ENCODE measurements at regions of chr4 and their contacts with region 1.

Region 1: DNA sequence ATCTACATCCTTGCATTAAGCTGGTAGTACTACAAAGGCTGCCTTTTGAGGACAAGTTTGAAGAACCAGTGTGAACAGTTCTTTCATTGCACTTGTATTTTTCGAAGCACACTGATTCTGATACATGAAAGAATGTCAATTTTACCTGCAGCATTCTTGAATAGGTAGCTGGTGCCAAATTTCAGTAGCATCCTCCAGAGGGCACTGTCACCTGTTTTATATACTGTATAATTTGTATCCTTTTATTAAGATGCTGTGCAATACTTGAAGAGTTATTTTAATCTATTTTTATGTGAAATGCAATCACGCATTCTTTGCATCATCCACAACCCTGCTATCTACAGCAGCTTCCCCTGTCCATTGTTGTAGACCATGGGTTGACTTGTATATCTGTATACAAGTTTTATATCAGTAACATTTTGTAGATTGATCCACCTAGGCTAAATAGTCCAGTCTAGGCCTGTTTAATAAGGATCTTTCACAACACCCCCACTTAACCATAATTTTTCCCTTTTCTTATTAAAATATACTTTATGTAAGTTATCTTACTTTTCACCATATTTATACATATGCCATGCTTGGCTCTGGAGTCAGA is 325.7 kb downstream of the PCDH7 start:
- DNase-seq: peak in 1 of 2 experiments; percentile 34
- H3K4me3 ChIP-seq: no peak overlapping the region
- H3K4me3 Mint-ChIP-seq: peak overlapping the region; percentile 23
- H3K27ac Mint-ChIP-seq: no peak overlapping the region
- H3K4me1 ChIP-seq: peaks cover 36% of the 10 kb centered on the region
- H3K4me1 Mint-ChIP-seq: peaks cover 36% of the 10 kb centered on the region
- H3K27me3 ChIP-seq: no peaks in the 10 kb centered on the region
- H3K27me3 Mint-ChIP-seq: no peaks in the 10 kb centered on the region
- CTCF ChIP-seq: peak; percentile 38 to 48

Region 2: DNA sequence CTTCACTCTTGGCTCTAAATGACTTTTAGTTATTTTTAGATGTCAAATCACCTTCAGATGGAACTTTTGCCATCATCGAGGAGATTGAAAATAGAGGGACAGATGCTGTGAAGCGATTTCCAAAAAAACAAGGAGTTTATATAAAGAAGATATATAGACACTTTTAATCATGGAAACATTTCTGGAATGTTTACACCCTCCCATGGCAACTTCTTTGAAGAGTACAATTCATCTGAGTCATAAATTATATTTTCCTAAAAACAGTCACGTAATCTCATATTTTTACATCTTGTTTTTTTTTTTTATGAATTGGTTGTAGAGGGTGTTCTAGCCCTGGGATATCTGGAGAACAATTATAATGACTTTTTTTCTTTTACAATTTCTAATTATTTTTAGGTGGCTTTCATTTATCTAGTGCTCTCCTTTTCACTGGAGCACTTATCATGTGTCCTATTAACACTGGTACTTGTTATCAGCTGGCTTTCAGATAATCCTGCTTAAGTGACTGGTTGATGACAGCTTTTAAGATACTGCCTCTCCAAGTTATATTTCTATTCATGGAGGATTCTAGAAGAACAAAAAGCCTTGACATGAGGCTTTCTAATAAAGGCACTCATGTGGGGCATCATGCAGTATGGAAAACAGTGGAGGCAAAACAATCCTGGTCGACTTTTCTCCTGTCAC is 300.7 kb before region 1 on chr4:
- CTCF ChIA-PET with region 1: no interaction called
- POLR2A ChIA-PET with region 1: no interaction called
- intact Hi-C with region 1: no loop called
- DNase-seq: no peak
- H3K4me3 ChIP-seq: no peak overlapping the region
- H3K4me3 Mint-ChIP-seq: no peak overlapping the region
- H3K27ac Mint-ChIP-seq: no peak overlapping the region
- H3K4me1 ChIP-seq: peaks cover 26% of the 10 kb centered on the region
- H3K4me1 Mint-ChIP-seq: peaks cover 20% of the 10 kb centered on the region
- H3K27me3 ChIP-seq: no peaks in the 10 kb centered on the region
- H3K27me3 Mint-ChIP-seq: no peaks in the 10 kb centered on the region
- CTCF ChIP-seq: no peak

Region 3: DNA sequence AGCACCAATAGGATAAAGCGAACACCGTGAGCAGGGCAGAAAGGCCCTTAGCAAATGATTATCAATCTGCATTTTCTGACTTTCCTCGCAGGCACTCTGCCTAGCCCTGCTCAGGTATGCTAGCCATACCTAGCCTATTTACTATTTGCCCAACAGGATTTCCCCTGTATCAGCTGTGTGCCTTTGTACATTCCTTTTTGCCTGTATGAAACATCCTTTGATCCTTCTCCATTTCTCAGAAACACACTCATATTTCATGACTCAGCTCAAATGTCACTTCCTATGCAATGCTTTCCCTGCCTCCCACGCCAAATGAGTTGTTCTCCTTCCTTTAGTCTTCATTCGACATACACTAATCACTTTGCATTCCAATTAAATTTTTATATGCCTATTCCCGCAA is 288.5 kb before region 1 on chr4:
- CTCF ChIA-PET with region 1: no interaction called
- POLR2A ChIA-PET with region 1: no interaction called
- intact Hi-C with region 1: loop called (anchors 1 kb)
- DNase-seq: peak; percentile 73 to 81
- H3K4me3 ChIP-seq: no peak overlapping the region
- H3K4me3 Mint-ChIP-seq: no peak overlapping the region
- H3K27ac Mint-ChIP-seq: no peak overlapping the region
- H3K4me1 ChIP-seq: peaks cover 62% of the 10 kb centered on the region
- H3K4me1 Mint-ChIP-seq: peaks cover 7% of the 10 kb centered on the region
- H3K27me3 ChIP-seq: no peaks in the 10 kb centered on the region
- H3K27me3 Mint-ChIP-seq: no peaks in the 10 kb centered on the region
- CTCF ChIP-seq: no peak

Region 4: DNA sequence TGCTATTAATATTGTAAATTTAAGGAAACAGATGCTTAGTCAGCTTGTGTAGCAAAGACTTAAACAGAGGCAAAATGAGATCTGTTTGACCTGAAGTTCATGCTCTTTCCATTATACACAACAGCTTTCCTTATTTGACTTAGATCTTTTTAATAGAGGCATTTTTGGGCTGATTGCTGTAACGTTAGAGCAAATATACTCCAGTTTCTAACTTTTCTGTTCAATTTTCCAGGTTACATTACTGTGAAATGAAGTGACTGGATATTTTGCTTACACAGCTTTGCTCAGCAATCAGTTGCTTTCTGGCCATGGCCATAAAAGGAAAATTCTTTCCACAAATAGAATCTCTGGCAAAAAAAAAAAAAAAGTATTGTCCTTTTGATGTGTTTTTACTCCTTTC is 179.5 kb before region 1 on chr4:
- CTCF ChIA-PET with region 1: no interaction called
- POLR2A ChIA-PET with region 1: no interaction called
- intact Hi-C with region 1: loop called (anchors 1 kb)
- DNase-seq: peak in 1 of 2 experiments; percentile 5
- H3K4me3 ChIP-seq: no peak overlapping the region
- H3K4me3 Mint-ChIP-seq: peak overlapping the region; percentile 64
- H3K27ac Mint-ChIP-seq: peak overlapping the region; percentile 73
- H3K4me1 ChIP-seq: peaks cover 31% of the 10 kb centered on the region
- H3K4me1 Mint-ChIP-seq: peaks cover 30% of the 10 kb centered on the region
- H3K27me3 ChIP-seq: no peaks in the 10 kb centered on the region
- H3K27me3 Mint-ChIP-seq: no peaks in the 10 kb centered on the region
- CTCF ChIP-seq: no peak

Region 5: GRCh38 chr4:31089815-31090214 is 44.0 kb after region 1 on chr4:
- CTCF ChIA-PET with region 1: no interaction called
- POLR2A ChIA-PET with region 1: no interaction called
- intact Hi-C with region 1: loop called (anchors 1 kb)
- DNase-seq: no peak
- H3K4me3 ChIP-seq: no peak overlapping the region
- H3K4me3 Mint-ChIP-seq: no peak overlapping the region
- H3K27ac Mint-ChIP-seq: no peak overlapping the region
- H3K4me1 ChIP-seq: peaks cover 26% of the 10 kb centered on the region
- H3K4me1 Mint-ChIP-seq: peaks cover 4% of the 10 kb centered on the region
- H3K27me3 ChIP-seq: no peaks in the 10 kb centered on the region
- H3K27me3 Mint-ChIP-seq: no peaks in the 10 kb centered on the region
- CTCF ChIP-seq: no peak

Region 6: DNA sequence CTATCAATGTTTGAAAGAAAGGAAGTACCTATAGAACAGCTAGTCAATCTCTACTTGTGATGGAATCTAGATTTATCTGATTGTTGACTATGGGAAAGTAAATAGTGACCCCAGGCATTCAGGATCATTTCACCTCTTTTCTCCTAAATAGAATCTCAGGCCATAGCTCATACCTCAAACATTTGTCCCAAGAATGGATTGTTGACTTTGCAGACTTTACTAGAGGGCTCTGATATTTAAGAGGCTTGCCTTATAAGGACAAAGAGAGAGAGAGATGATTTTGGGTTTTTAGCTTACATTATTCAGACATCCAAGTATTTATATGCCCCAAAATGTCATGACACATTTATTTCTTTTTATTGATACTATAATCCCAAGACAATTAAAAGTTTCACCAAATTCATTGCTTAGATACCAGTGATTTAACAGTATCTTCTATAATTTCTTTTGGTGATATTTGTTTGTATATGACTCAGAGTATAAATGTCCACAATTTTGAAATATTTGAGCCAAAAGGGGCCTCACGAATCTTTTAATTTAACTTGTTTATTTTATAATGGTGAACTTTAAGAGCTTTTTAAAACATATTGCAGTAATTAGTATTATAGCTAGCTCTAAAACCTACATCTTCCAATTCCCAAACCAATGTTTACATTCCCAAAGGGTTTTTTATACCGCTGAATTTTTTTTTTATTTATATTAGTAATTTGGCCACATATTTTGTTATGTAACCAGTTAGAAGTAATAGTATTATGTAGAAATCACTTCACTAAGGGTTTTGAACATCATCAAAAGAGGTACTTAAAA is 288.5 kb after region 1 on chr4:
- CTCF ChIA-PET with region 1: no interaction called
- POLR2A ChIA-PET with region 1: no interaction called
- intact Hi-C with region 1: loop called (anchors 5 kb)
- DNase-seq: peak in 1 of 2 experiments; percentile 3
- H3K4me3 ChIP-seq: no peak overlapping the region
- H3K4me3 Mint-ChIP-seq: no peak overlapping the region
- H3K27ac Mint-ChIP-seq: no peak overlapping the region
- H3K4me1 ChIP-seq: no peaks in the 10 kb centered on the region
- H3K4me1 Mint-ChIP-seq: no peaks in the 10 kb centered on the region
- H3K27me3 ChIP-seq: no peaks in the 10 kb centered on the region
- H3K27me3 Mint-ChIP-seq: no peaks in the 10 kb centered on the region
- CTCF ChIP-seq: no peak

Region 7: GRCh38 chr4:31411565-31411964 is 365.7 kb after region 1 on chr4:
- CTCF ChIA-PET with region 1: no interaction called
- POLR2A ChIA-PET with region 1: no interaction called
- intact Hi-C with region 1: loop called (anchors 1 kb)
- DNase-seq: peak in 1 of 2 experiments; percentile 8
- H3K4me3 ChIP-seq: no peak overlapping the region
- H3K4me3 Mint-ChIP-seq: no peak overlapping the region
- H3K27ac Mint-ChIP-seq: no peak overlapping the region
- H3K4me1 ChIP-seq: peaks cover 17% of the 10 kb centered on the region
- H3K4me1 Mint-ChIP-seq: peaks cover 22% of the 10 kb centered on the region
- H3K27me3 ChIP-seq: no peaks in the 10 kb centered on the region
- H3K27me3 Mint-ChIP-seq: peaks cover 3% of the 10 kb centered on the region
- CTCF ChIP-seq: no peak